WTC11 (cell line): ENCODE measurements at regions of chr20 and their contacts with region 1.

Region 1: DNA sequence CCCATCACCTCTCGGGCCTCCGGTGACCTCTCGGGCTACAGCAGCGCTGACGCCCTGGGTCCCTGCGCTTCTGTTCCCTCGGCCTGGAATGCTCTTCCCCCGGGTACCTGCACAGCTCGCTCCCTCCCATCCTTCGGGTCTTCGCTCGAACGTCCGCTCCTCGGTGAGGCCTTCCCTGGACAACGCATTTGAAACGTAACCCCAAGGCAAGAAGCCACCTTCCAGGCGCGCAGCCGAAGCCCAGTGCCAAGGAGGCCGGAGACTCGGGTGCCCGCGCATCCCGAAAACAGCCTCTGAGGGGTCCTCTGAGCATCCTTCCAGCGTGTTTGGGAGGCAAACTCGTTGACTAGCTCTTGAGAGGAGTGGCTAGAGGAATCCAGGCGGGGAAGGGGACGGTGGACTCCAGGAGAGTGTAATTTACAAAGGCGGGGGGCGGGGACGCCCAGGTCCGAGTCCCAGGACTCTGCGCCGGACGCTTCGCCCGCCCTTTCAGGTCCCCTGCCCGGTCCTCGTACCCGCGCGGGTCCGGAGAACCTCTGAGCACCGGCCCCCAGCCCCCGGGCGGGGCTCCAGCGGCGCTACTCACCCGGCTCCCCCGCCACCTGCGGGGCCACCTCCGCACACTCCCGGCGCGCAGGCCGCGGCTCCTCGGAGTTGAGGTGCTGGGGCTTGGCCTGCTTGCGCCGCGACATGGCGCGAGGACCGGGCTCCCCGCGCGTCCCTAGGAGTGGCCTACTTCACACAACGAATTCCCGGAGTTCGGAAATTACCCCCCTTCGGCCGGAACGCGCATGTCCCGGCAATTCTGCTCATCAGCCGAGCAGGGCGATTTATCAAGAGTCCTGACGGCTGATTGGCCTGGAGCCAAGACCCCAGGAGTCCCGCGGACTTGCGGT is 86.8 kb downstream of the ZFP64 start:
- DNase-seq: peak; percentile 76
- ATAC-seq: peak; percentile 20
- H3K4me3 Mint-ChIP-seq: peak overlapping the region; percentile 87
- H3K27ac Mint-ChIP-seq: peak overlapping the region; percentile 97
- H3K4me1 Mint-ChIP-seq: peaks cover 27% of the 10 kb centered on the region
- H3K27me3 Mint-ChIP-seq: peaks cover 68% of the 10 kb centered on the region
- CTCF ChIP-seq: no peak

Region 2: GRCh38 chr20:52076164-52076563 is 28.6 kb before region 1 on chr20:
- CTCF ChIA-PET with region 1: no interaction called
- POLR2A ChIA-PET with region 1: no interaction called
- DNase-seq: no peak
- ATAC-seq: no peak
- H3K4me3 Mint-ChIP-seq: no peak overlapping the region
- H3K27ac Mint-ChIP-seq: no peak overlapping the region
- H3K4me1 Mint-ChIP-seq: peaks cover 3% of the 10 kb centered on the region
- H3K27me3 Mint-ChIP-seq: no peaks in the 10 kb centered on the region
- CTCF ChIP-seq: no peak

Region 3: DNA sequence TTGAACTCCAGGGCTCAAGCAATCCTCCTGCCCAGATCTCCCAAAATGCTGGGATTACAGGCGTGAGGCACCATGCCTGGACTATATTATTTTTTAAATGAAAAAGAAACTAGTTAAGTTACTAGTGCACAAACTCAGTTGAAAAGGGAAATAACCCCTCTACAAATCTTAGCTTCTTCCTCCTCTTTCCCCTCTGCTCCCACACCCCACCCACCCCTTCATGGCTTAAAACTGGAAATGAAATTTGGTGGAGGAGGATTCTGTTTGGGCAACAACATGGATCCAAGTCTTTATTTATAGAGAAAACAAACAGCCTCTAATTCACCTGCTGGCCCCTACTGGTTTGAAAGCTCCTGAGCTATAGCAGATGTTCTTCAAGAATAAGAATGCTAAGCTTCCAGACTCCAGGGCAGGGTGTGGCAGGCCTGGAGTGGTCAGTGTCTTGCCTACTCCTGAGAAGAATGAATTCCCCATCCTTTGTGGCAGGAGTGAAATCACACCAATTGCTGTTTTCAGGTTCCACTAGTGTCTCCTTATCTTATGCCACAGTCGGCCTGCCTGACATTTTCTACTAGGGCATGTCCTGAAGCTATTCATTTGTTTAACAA is 13.3 kb after region 1 on chr20:
- CTCF ChIA-PET with region 1: interaction called, 11 read pairs
- POLR2A ChIA-PET with region 1: no interaction called
- DNase-seq: no peak
- ATAC-seq: no peak
- H3K4me3 Mint-ChIP-seq: no peak overlapping the region
- H3K27ac Mint-ChIP-seq: no peak overlapping the region
- H3K4me1 Mint-ChIP-seq: no peaks in the 10 kb centered on the region
- H3K27me3 Mint-ChIP-seq: no peaks in the 10 kb centered on the region; the same call in 1 of the 2 replicates
- CTCF ChIP-seq: no peak

Region 4: GRCh38 chr20:52191132-52191915 is 86.5 kb after region 1 on chr20 and contains the start of gene ZFP64:
- CTCF ChIA-PET with region 1: interaction called, 25 read pairs
- POLR2A ChIA-PET with region 1: interaction called, 4 read pairs
- DNase-seq: peak; percentile 71
- ATAC-seq: peak; percentile 69
- H3K4me3 Mint-ChIP-seq: peak within 1 kb of the TSS; percentile 93
- H3K27ac Mint-ChIP-seq: peak within 1 kb of the TSS; percentile 95
- H3K4me1 Mint-ChIP-seq: peaks cover 24% of the 10 kb centered on the region
- H3K27me3 Mint-ChIP-seq: no peaks in the 10 kb centered on the region
- CTCF ChIP-seq: no peak
- total RNA-seq, gene ZFP64: 26.1 to 32.4 TPM (median 29.4 TPM) in 3 replicates